ENCODE measurements at regions of chr11 and their contacts with region 1.

Region 1: GRCh38 chr11:10405855-10406592 is 49.0 kb upstream of the AMPD3 start:
- DNase-seq: peak; percentile 37 to 72
- H3K4me3 ChIP-seq: no peak overlapping the region
- H3K27ac ChIP-seq: peak overlapping the region; percentile 87
- H3K4me1 ChIP-seq: peaks cover 17% of the 10 kb centered on the region
- H3K27me3 ChIP-seq: no peaks in the 10 kb centered on the region
- CTCF ChIP-seq: peak; percentile 68

Region 2: DNA sequence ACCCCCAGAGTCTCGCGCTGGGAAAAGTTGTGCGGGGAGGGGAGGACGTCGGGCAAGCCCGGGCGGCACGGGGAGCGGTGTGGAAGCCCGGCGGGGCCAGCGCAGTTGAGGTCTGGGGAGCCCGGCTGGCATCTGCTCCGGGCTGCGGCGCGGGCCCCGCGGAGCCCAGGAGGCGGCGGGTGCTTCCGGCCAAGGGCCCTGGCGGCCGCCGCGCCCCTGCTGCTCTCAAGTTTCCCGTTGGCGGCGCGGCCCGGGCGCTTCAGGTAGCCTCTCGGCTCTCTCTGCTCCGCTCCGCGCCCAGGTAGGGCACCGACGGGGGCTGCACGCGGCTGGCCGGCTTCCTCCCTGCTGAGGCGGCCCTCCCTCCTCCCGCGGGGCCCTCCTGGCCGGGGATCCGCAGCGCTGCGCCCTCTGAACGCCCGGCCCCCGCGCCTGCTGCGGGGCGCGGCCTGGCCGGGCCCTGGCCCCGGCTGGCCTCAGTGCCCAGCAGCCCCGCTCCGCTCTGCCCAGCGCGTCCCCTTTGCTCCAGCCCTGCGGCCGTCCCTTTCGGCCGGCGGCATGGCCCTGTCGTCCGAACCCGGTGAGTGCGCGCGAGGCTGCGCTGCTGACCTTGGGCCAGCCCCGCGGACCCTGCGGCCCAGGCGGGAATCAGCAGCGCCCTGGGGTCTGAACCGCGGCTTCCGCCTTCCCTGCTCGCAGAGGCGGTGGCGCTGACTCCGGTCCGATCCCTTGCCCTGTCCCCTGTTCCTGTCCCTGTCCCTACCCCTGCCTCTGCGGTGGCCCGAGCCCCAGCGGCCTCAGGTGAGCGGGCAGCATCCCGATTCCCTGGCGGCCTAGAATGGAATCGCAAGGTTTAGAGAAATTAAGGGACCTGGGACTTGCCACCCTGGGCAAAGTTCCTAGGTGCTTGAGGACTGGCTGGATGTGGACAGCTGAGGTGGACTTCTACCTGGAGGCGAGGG is 44.7 kb after region 1 on chr11:
- CTCF ChIA-PET with region 1: interaction called, 5 read pairs
- POLR2A ChIA-PET with region 1: no interaction called
- intact Hi-C with region 1: loop called (anchors 1 kb)
- DNase-seq: peak; percentile 47 to 63
- H3K4me3 ChIP-seq: peak overlapping the region; percentile 64
- H3K27ac ChIP-seq: peak overlapping the region; percentile 13; the same call in 1 of the 2 replicates
- H3K4me1 ChIP-seq: peaks cover 38% of the 10 kb centered on the region
- H3K27me3 ChIP-seq: no peaks in the 10 kb centered on the region
- CTCF ChIP-seq: peak; percentile 76

Region 3: DNA sequence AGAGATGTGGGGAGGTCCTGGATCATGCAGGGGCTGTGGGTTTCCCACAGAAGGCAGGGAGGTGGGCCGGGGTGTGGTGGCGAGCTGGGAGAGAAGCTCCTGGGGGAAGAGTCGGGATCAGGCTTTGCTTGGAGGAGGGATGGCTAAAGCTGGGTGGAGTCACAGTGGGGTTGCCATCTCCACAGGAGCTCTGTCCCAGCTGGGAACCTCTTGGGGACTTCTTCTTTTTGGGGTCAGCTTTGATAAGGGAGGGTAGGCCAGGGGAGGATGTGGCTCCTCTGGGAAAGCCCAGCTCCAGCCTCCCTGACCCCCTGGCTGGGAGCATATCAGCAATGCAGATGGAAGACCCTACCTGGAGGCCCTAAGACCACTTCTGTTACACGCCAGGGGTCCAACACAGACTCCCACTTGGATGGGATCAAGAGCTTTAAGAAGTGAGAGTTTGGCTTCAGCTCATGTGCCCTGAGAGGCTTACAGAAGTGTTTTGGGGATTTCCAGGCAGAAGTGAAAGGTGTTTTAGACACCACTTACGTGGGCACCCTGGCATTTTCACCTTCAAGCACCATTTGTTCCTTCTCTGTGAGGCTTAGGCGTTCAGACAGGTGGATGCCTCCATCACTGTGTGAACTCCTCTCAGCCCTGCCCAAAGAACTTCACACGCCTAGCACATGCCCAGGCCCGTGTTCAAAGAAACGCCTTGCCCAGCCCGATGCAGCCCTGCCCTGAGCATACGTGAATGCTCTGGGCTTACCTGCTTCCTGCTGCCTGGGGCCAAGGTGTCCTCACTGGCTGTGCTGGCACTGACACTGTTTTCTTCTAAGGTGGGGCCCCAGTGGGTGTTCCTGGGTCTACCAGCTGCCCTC is 82.8 kb after region 1 on chr11:
- CTCF ChIA-PET with region 1: no interaction called
- POLR2A ChIA-PET with region 1: no interaction called
- intact Hi-C with region 1: loop called (anchors 5 kb)
- DNase-seq: peak; percentile 40 to 68
- H3K4me3 ChIP-seq: no peak overlapping the region
- H3K27ac ChIP-seq: peak overlapping the region; percentile 74
- H3K4me1 ChIP-seq: peaks cover 54% of the 10 kb centered on the region
- H3K27me3 ChIP-seq: no peaks in the 10 kb centered on the region
- CTCF ChIP-seq: no peak

Region 4: GRCh38 chr11:10514210-10514609 is 108.2 kb after region 1 on chr11:
- CTCF ChIA-PET with region 1: no interaction called
- POLR2A ChIA-PET with region 1: no interaction called
- intact Hi-C with region 1: loop called (anchors 5 kb)
- DNase-seq: no peak
- H3K4me3 ChIP-seq: no peak overlapping the region
- H3K27ac ChIP-seq: no peak overlapping the region
- H3K4me1 ChIP-seq: 0 out of 2 replicates have a peak, but pooled peaks cover 4% of the 10 kb centered on the region
- H3K27me3 ChIP-seq: no peaks in the 10 kb centered on the region
- CTCF ChIP-seq: peak; percentile 60

Region 5: GRCh38 chr11:10653926-10654810 is 248.1 kb after region 1 on chr11:
- CTCF ChIA-PET with region 1: no interaction called
- POLR2A ChIA-PET with region 1: no interaction called
- intact Hi-C with region 1: loop called (anchors 1 kb)
- DNase-seq: no peak
- H3K4me3 ChIP-seq: no peak overlapping the region
- H3K27ac ChIP-seq: peak overlapping the region; percentile 62; the same call in 1 of the 2 replicates
- H3K4me1 ChIP-seq: peaks cover 42% of the 10 kb centered on the region
- H3K27me3 ChIP-seq: no peaks in the 10 kb centered on the region
- CTCF ChIP-seq: peak; percentile 67

Measured in PC-9 (cell line).